Endothelial cell of umbilical vein (primary cell): ENCODE measurements at regions of chr2 and their contacts with region 1.

Region 1: DNA sequence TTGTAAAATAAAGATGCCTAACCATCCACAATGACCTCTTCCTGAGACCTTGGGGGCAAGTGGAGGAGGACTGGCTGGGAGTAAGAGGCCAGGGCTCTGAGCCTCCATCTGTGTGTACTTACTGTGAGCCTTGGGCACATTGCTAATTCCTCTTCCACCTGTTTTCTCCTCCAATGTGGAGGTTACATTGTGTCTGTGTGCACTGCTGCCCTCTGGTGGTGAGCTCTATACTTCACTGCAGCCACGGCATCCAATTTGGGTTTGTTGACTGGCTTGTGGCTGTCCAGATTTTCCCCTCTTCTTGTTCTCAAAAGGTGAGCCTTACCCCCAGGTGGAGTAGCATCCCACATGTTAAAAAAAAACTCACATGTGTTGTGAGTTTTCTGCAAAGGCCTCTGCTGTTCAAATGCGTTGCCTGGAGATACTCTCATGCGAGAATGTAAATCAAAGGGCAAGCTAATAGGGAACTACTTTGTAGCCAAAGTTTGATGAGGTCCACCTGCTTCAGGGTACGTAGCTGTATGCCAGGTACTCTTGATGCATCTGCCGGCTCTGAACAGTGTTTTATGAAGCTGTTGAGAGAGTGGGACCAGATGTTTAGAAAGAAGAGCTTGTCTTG is 80.8 kb downstream of the APOB start:
- DNase-seq: peak; percentile 67
- H3K4me3 ChIP-seq: no peak overlapping the region
- H3K27ac ChIP-seq: no peak overlapping the region
- H3K4me1 ChIP-seq: no peaks in the 10 kb centered on the region
- H3K27me3 ChIP-seq: peaks cover 2 to 5% of the 10 kb centered on the region in 2 experiments
- CTCF ChIP-seq: peak; percentile 74 to 80
- POLR2A ChIP-seq: no peak

Region 2: DNA sequence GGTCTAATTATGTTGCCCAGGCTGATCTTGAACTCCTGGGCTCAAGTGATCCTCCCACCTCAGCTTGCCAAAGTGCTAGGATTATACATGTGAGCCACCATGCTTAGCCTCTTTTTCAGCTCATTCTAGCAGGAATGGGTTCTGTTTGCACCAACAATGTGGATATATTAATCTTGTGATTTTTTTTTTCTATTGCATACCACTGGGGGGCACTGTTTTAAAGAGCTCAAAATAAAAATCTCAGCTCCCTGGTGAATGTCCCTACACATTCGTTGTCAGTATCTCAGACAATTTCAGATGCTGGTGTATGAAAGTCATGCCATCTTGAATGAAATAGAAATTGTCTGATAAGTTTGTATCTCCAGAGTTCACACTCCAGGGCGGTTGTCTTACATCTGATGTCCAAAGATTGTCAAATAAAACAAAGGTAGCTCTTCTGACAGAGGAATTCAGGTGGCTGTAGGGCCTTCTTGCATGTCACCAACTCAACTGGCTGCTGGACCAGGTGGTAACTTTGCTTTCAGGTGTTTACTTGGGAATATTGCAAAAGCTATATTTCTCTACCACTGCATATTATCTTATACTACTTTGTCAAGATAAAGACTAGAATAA is 947.5 kb before region 1 on chr2:
- CTCF ChIA-PET with region 1: no interaction called
- POLR2A ChIA-PET with region 1: no interaction called
- dilution Hi-C with region 1: no loop called
- intact Hi-C with region 1: no loop called
- DNase-seq: peak; percentile 63
- H3K4me3 ChIP-seq: no peak overlapping the region
- H3K27ac ChIP-seq: no peak overlapping the region
- H3K4me1 ChIP-seq: peaks cover 13% of the 10 kb centered on the region
- H3K27me3 ChIP-seq: peaks cover 0 to 3% of the 10 kb centered on the region in 2 experiments
- CTCF ChIP-seq: peak; percentile 29 to 44
- POLR2A ChIP-seq: no peak

Region 3: GRCh38 chr2:20642055-20642971 is 320.7 kb before region 1 on chr2:
- CTCF ChIA-PET with region 1: no interaction called
- POLR2A ChIA-PET with region 1: no interaction called
- dilution Hi-C with region 1: no loop called
- intact Hi-C with region 1: no loop called
- DNase-seq: peak; percentile 76
- H3K4me3 ChIP-seq: no peak overlapping the region
- H3K27ac ChIP-seq: no peak overlapping the region
- H3K4me1 ChIP-seq: peaks cover 8% of the 10 kb centered on the region
- H3K27me3 ChIP-seq: no peaks in the 10 kb centered on the region
- CTCF ChIP-seq: peak; percentile 98 to 99
- POLR2A ChIP-seq: no peak

Region 4: GRCh38 chr2:20675701-20676352 is 287.2 kb before region 1 on chr2:
- CTCF ChIA-PET with region 1: interaction called, 58 read pairs
- POLR2A ChIA-PET with region 1: no interaction called
- dilution Hi-C with region 1: no loop called
- intact Hi-C with region 1: no loop called
- DNase-seq: no peak
- H3K4me3 ChIP-seq: no peak overlapping the region
- H3K27ac ChIP-seq: no peak overlapping the region
- H3K4me1 ChIP-seq: peaks cover 15% of the 10 kb centered on the region
- H3K27me3 ChIP-seq: peaks cover 9 to 11% of the 10 kb centered on the region in 2 experiments
- CTCF ChIP-seq: no peak
- POLR2A ChIP-seq: no peak

Region 5: DNA sequence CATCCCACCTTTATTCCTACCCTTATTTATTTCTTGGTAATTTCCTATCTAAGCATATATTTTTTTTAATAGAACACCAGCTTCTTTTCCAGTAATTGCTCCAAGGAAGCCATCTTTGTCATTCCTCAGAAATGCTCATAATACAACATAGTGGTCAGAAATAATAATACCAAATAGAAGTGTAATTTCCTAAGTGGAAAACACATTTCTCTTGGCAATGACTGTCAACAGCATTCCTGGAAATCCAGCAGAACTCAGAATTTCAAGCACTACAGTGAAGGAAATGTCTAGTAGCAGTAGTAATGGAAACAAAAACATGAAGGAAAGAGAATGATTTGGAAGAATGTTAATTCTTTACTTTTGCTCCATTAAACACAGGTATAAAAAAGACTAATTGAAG is 239.5 kb before region 1 on chr2:
- CTCF ChIA-PET with region 1: interaction called, 4 read pairs
- POLR2A ChIA-PET with region 1: no interaction called
- dilution Hi-C with region 1: no loop called
- intact Hi-C with region 1: loop called (anchors 2 kb)
- DNase-seq: peak; percentile 87
- H3K4me3 ChIP-seq: no peak overlapping the region
- H3K27ac ChIP-seq: no peak overlapping the region
- H3K4me1 ChIP-seq: peaks cover 13% of the 10 kb centered on the region
- H3K27me3 ChIP-seq: no peaks in the 10 kb centered on the region
- CTCF ChIP-seq: no peak
- POLR2A ChIP-seq: no peak

Region 6: GRCh38 chr2:20796374-20796791 is 166.7 kb before region 1 on chr2:
- CTCF ChIA-PET with region 1: no interaction called
- POLR2A ChIA-PET with region 1: no interaction called
- dilution Hi-C with region 1: no loop called
- intact Hi-C with region 1: no loop called
- DNase-seq: no peak
- H3K4me3 ChIP-seq: no peak overlapping the region
- H3K27ac ChIP-seq: no peak overlapping the region
- H3K4me1 ChIP-seq: no peaks in the 10 kb centered on the region
- H3K27me3 ChIP-seq: no peaks in the 10 kb centered on the region
- CTCF ChIP-seq: no peak
- POLR2A ChIP-seq: no peak

Region 7: DNA sequence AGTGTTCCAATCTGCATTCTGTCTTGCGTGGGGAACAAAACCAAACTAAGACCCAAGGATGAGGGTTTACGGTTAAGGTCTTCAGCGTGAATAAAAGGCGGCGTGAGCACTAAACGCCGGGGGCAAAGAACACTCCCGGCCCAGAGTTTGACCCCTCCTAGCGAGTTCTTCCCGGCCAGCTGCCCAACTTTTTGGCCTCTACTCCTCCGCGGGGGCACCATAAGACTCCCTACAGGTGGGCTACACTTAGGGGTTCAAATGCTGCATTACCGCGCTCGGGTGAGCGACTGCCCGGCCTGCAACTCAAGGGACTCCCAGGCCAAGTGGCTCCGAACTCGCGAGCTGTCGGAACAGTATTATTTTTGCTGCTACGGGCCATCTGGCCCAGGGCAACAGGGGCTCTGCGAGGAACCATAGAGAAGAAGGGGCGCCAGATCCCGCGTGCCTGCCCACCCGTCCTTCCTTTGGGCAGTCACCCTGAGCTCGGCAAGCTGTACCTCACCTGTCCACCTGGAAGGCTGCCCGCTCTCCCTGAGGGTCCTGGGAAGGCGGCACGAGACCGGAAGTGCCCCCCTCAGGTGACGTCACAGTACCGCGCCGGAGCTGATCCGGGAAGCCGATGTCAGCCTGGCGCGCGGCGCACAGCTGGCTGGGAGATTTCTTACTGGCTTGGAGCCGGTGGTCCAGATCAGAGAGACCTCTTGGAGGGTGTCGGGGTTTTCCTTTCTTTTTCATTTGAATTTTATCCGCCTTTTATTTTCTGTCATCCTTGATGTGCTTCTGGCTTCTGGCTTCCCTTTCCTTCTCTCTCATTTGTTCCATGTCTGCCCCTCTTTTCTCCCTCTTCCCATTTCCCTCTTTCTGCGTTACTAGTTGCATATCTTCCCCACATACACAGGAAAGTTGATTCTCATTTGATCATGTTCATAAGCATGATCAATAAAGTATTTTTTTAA is 140.2 kb before region 1 on chr2 and contains the start of gene LDAH:
- CTCF ChIA-PET with region 1: interaction called, 4 read pairs
- POLR2A ChIA-PET with region 1: no interaction called
- dilution Hi-C with region 1: no loop called
- intact Hi-C with region 1: loop called (anchors 1 kb)
- DNase-seq: peak; percentile 87
- H3K4me3 ChIP-seq: peak within 1 kb of the TSS; percentile 51 to 89 (median 66)
- H3K27ac ChIP-seq: peak within 1 kb of the TSS; percentile 72
- H3K4me1 ChIP-seq: no peaks in the 10 kb centered on the region
- H3K27me3 ChIP-seq: peaks cover 0 to 2% of the 10 kb centered on the region in 2 experiments
- CTCF ChIP-seq: no peak
- POLR2A ChIP-seq: peak; percentile 90
- total RNA-seq, gene LDAH: 24.0 and 24.2 TPM in 2 replicates

Region 8: DNA sequence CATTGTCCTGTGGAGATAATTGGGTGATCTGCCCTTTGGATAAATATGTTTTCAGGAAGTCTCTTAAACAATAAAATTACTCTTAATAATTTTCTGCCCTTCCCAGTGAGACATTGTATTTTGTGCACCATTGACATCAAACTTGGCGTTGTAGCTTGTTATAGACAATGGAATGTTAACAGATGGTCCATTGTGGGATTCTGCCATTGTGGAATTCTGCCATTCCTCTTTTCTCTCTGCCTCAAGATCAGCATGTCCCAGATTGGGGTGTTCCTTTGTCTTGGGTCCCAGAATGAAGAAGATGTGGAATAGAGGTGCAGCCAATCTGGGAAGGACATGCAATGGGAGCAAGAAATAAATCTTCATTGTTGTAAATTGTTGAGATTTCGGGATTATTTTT is 125.0 kb before region 1 on chr2:
- CTCF ChIA-PET with region 1: no interaction called
- POLR2A ChIA-PET with region 1: no interaction called
- dilution Hi-C with region 1: no loop called
- intact Hi-C with region 1: no loop called
- DNase-seq: no peak
- H3K4me3 ChIP-seq: no peak overlapping the region
- H3K27ac ChIP-seq: no peak overlapping the region
- H3K4me1 ChIP-seq: no peaks in the 10 kb centered on the region
- H3K27me3 ChIP-seq: peaks cover 0 to 2% of the 10 kb centered on the region in 2 experiments
- CTCF ChIP-seq: no peak
- POLR2A ChIP-seq: no peak

Region 9: DNA sequence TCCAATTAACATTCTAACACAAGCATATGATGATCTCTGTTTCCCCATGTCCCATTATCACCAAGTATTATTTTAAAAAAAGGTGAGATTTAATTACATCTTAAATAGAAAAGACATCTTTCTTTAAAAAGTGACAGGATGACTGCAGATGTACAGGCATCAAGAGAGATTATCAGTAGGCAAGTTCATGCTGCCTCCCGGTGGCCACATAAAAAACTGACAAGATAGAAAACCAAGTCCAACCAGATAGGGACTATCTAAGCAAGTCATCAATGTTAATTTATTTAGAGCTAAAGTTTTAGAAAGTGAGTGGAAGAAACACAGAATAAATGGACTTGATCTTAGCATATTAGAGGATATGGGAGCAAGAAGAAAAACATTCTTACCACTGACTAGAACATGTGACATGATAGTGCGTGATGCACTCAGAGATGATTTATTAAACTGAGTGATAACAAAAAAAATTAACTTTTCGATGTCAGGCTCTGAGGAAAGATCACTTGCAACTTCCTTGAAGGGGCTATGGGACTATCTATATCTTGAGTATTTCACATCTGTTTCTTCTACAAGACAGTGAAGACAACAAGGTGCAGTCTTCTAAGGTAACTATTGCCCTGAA is 155.4 kb after region 1 on chr2:
- CTCF ChIA-PET with region 1: interaction called, 5 read pairs
- POLR2A ChIA-PET with region 1: no interaction called
- dilution Hi-C with region 1: no loop called
- intact Hi-C with region 1: loop called (anchors 1 kb)
- DNase-seq: peak; percentile 59
- H3K4me3 ChIP-seq: no peak overlapping the region
- H3K27ac ChIP-seq: no peak overlapping the region
- H3K4me1 ChIP-seq: no peaks in the 10 kb centered on the region
- H3K27me3 ChIP-seq: no peaks in the 10 kb centered on the region
- CTCF ChIP-seq: peak; percentile 18 to 45
- POLR2A ChIP-seq: no peak